Endothelial cell of umbilical vein (primary cell): ENCODE measurements at regions of chr10 and their contacts with region 1.

Region 1: GRCh38 chr10:97914837-97915211 is 65.2 kb downstream of the GOLGA7B start:
- DNase-seq: peak; percentile 52
- H3K4me3 ChIP-seq: no peak overlapping the region
- H3K27ac ChIP-seq: no peak overlapping the region
- H3K4me1 ChIP-seq: no peaks in the 10 kb centered on the region
- H3K27me3 ChIP-seq: no peaks in the 10 kb centered on the region
- CTCF ChIP-seq: peak; percentile 83 to 96
- POLR2A ChIP-seq: no peak

Region 2: DNA sequence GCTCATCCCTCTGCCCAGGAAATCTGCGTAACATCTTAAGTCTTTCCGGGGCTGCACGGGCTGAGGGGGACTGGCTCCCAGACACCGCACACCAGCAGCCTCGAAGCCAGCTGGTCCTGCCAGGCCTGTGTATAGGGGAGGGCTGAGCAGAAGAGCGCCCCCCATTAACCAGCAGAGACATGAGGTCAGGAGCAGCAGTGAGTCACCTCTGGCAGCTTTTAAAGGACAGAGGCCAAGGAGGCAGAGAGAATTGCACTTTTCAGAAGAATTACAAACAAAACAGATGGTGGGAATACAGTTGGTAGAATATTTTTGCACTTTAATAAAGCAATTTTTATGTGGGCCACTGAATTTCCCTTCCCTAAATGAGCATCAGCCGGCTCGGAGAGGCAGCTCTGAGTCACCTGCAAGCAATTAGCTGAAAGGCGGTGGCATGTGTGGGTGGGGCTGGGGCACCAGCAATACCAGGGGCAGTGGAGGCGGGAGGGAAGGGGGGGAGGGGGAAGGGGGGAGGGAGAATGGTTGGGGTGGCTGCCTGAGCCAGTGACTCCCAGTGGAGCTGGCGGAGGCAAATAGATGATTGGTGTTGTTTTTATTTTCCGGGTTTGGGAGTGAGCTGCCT is 26.1 kb before region 1 on chr10:
- CTCF ChIA-PET with region 1: interaction called, 12 read pairs
- POLR2A ChIA-PET with region 1: no interaction called
- dilution Hi-C with region 1: no loop called
- intact Hi-C with region 1: no loop called
- DNase-seq: peak; percentile 54
- H3K4me3 ChIP-seq: no peak overlapping the region
- H3K27ac ChIP-seq: no peak overlapping the region
- H3K4me1 ChIP-seq: peaks cover 2% of the 10 kb centered on the region
- H3K27me3 ChIP-seq: no peaks in the 10 kb centered on the region
- CTCF ChIP-seq: peak; percentile 4 to 13
- POLR2A ChIP-seq: no peak

Region 3: DNA sequence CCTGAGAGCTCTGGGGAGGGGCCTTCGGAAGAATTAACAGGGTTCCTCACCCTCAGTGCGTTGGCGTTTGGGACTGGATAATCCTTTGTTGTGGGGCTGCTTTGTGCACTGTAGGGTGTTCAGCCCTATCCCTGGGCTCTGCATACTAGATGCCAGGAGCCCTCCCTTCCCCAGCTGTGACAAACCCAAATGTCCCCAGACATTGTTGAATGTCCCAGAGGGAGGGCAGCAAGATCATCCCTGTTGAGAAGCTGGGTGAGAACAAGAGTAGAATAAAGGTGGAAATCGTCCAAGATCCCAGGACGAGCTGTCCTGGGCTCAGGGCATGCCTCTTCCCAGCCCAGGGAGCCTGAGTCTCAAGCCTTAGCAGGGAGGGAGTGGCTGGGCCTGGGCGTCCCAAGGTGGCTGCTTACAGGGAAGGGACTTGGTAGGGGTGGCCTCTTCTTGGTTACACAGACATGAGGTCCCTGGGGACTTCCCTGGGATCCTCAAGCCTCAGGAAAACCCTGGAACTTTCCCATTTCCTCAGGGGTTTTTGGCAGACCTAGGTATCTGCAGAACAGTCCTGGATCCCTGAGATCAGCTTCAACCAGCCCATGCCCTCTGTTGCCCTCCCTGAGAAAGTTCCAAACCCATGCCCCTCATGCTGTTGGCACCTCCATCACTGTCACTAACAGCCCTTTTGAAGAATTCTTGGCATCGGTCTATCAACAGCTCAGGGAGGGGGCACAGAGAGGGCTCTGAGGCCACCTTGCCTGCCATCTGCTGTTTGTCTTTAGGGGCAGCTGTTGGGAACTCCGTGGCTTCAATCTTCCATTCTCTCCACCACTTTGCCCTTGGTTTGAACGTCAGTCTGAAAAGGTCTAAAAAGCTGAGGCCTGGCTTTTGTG is 11.5 kb before region 1 on chr10:
- CTCF ChIA-PET with region 1: interaction called, 41 read pairs
- POLR2A ChIA-PET with region 1: no interaction called
- dilution Hi-C with region 1: no loop called
- intact Hi-C with region 1: no loop called
- DNase-seq: no peak
- H3K4me3 ChIP-seq: no peak overlapping the region
- H3K27ac ChIP-seq: no peak overlapping the region
- H3K4me1 ChIP-seq: no peaks in the 10 kb centered on the region
- H3K27me3 ChIP-seq: no peaks in the 10 kb centered on the region
- CTCF ChIP-seq: no peak
- POLR2A ChIP-seq: no peak

Region 4: GRCh38 chr10:98038288-98038687 is 123.5 kb after region 1 on chr10:
- CTCF ChIA-PET with region 1: interaction called, 540 read pairs
- POLR2A ChIA-PET with region 1: no interaction called
- dilution Hi-C with region 1: no loop called
- intact Hi-C with region 1: loop called (anchors 1 kb)
- DNase-seq: no peak
- H3K4me3 ChIP-seq: no peak overlapping the region
- H3K27ac ChIP-seq: no peak overlapping the region
- H3K4me1 ChIP-seq: no peaks in the 10 kb centered on the region
- H3K27me3 ChIP-seq: peaks cover 22 to 29% of the 10 kb centered on the region in 2 experiments
- CTCF ChIP-seq: no peak
- POLR2A ChIP-seq: no peak

Region 5: DNA sequence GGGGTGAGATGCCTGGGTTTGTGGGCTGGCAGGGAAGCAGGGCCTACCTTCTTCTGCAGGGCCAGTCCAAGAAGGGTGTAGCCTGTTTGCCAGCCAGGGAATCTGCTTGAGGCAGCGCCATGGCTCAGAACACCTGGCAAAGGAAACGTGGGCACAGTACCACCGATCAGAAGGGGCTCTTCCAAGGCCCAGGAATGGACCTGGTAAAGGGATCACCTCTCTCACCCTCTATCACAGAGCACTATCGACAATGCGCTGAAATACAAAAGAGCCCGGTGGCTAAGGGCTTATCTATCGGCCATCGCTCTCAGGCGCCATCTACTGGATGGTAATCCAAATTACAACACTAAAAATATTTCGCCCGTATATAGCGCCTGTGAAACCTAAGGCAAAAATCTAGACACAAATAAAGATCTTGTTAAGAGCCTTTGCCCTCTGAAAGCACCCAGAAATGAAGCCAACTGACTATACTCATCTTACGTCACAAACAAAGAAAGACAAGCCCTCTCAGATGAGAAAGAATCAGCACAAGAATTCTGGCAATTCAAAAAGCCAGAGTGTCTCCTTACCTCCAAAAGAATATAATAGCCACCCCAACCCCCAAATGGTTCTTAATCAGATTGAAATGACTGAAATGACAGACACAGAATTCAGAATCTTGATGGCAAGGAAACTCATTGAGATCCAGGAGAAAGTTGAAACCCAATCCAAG is 749.7 kb after region 1 on chr10:
- CTCF ChIA-PET with region 1: no interaction called
- POLR2A ChIA-PET with region 1: no interaction called
- dilution Hi-C with region 1: no loop called
- intact Hi-C with region 1: loop called (anchors 10 kb)
- DNase-seq: peak; percentile 18
- H3K4me3 ChIP-seq: no peak overlapping the region
- H3K27ac ChIP-seq: no peak overlapping the region
- H3K4me1 ChIP-seq: no peaks in the 10 kb centered on the region
- H3K27me3 ChIP-seq: peaks cover 0 to 1% of the 10 kb centered on the region in 2 experiments
- CTCF ChIP-seq: peak; percentile 64 to 70
- POLR2A ChIP-seq: no peak

Region 6: GRCh38 chr10:98848361-98848760 is 933.5 kb after region 1 on chr10:
- CTCF ChIA-PET with region 1: no interaction called
- POLR2A ChIA-PET with region 1: no interaction called
- dilution Hi-C with region 1: no loop called
- intact Hi-C with region 1: no loop called
- DNase-seq: no peak
- H3K4me3 ChIP-seq: no peak overlapping the region
- H3K27ac ChIP-seq: no peak overlapping the region
- H3K4me1 ChIP-seq: no peaks in the 10 kb centered on the region
- H3K27me3 ChIP-seq: no peaks in the 10 kb centered on the region
- CTCF ChIP-seq: no peak
- POLR2A ChIP-seq: no peak

Region 7: GRCh38 chr10:98967601-98968000 is 1052.8 kb after region 1 on chr10:
- CTCF ChIA-PET with region 1: no interaction called
- POLR2A ChIA-PET with region 1: no interaction called
- dilution Hi-C with region 1: no loop called
- intact Hi-C with region 1: no loop called
- DNase-seq: no peak
- H3K4me3 ChIP-seq: no peak overlapping the region
- H3K27ac ChIP-seq: no peak overlapping the region
- H3K4me1 ChIP-seq: no peaks in the 10 kb centered on the region
- H3K27me3 ChIP-seq: no peaks in the 10 kb centered on the region
- CTCF ChIP-seq: no peak
- POLR2A ChIP-seq: no peak

Region 8: GRCh38 chr10:99248824-99249223 is 1334.0 kb after region 1 on chr10:
- CTCF ChIA-PET with region 1: interaction called, 11 read pairs
- POLR2A ChIA-PET with region 1: no interaction called
- dilution Hi-C with region 1: no loop called
- intact Hi-C with region 1: no loop called
- DNase-seq: no peak
- H3K4me3 ChIP-seq: no peak overlapping the region
- H3K27ac ChIP-seq: no peak overlapping the region
- H3K4me1 ChIP-seq: no peaks in the 10 kb centered on the region
- H3K27me3 ChIP-seq: no peaks in the 10 kb centered on the region
- CTCF ChIP-seq: no peak
- POLR2A ChIP-seq: no peak